Gastrocnemius medialis (tissue), 4 donors: ENCODE measurements at regions of chr9 and their contacts with region 1.

Region 1: GRCh38 chr9:70079417-70080037 is 35.9 kb downstream of the MAMDC2 start:
- DNase-seq: no peak
- ATAC-seq: peak; percentile 46 to 55
- H3K4me3 ChIP-seq: no peak overlapping the region
- H3K27ac ChIP-seq: peak overlapping the region; percentile 3 to 40 (median 38)
- H3K4me1 ChIP-seq: peaks cover 19 to 35% of the 10 kb centered on the region in 2 donors
- H3K27me3 ChIP-seq: no peaks in the 10 kb centered on the region
- CTCF ChIP-seq: no peak
- POLR2A ChIP-seq: no peak

Region 2: DNA sequence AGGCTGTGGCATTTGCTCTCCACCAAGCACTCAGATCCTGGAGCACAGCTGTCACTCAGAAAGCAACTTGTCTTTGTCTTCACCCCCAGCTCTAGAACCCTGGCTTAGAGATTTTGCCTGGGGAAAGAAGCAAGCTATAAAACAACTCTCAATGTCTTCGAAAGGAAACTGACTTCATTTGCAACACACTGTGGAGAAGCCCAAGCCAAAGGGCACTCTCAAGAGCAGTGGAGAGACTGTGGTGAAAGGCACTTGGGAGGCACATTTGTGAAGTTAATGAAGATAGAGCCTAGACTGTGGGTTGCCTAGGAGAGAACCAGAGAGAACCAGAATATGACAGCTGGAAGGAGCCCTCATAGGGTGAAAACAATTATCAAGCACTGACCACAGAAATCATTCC is 155.6 kb before region 1 on chr9:
- in situ Hi-C with region 1: no loop called
- intact Hi-C with region 1: no loop called
- DNase-seq: no peak
- ATAC-seq: no peak
- H3K4me3 ChIP-seq: no peak overlapping the region
- H3K27ac ChIP-seq: no peak overlapping the region
- H3K4me1 ChIP-seq: no peaks in the 10 kb centered on the region
- H3K27me3 ChIP-seq: no peaks in the 10 kb centered on the region
- CTCF ChIP-seq: no peak
- POLR2A ChIP-seq: no peak

Region 3: GRCh38 chr9:69996967-69997366 is 82.6 kb before region 1 on chr9:
- in situ Hi-C with region 1: no loop called
- intact Hi-C with region 1: no loop called
- DNase-seq: peak; percentile 41 to 44
- ATAC-seq: peak; percentile 72 to 91
- H3K4me3 ChIP-seq: no peak overlapping the region
- H3K27ac ChIP-seq: peak overlapping the region; percentile 56 to 72 (median 65)
- H3K4me1 ChIP-seq: peaks cover 3 to 4% of the 10 kb centered on the region in 2 donors
- H3K27me3 ChIP-seq: no peaks in the 10 kb centered on the region
- CTCF ChIP-seq: no peak
- POLR2A ChIP-seq: no peak

Region 4: DNA sequence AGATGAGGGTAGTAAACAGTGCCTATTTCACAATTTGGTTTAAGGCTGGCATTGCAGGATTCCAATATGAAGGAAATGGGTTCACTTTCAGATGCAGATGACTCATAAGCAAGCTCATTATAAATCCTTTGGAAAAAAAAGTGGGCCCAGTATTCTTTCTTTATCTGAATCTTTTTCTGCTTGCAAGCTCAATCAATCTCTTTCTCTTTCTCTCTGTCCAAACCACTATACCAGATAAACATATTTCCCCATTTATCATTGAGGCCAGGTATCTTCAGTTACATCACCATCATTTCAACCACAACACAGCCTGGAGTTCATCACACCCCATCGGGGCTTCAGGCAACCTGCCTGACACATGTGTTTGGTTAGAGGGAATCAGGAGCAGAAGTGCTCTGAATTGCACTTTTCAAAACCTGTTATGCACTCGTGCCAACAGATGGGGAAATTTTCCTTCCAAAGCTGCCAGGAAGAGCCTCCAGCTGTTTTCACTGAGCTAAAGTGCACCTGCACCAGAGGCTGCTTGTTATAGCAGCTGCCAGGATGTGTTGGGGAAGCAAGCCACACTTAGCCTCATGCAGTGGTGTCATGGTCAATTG is 65.8 kb before region 1 on chr9:
- in situ Hi-C with region 1: no loop called
- intact Hi-C with region 1: loop called (anchors 5 kb)
- DNase-seq: peak; percentile 15 to 72
- ATAC-seq: peak; percentile 61 to 82
- H3K4me3 ChIP-seq: no peak overlapping the region
- H3K27ac ChIP-seq: peak overlapping the region in 1 of 4 donors; percentile 50
- H3K4me1 ChIP-seq: peaks cover 0 to 3% of the 10 kb centered on the region in 2 donors
- H3K27me3 ChIP-seq: no peaks in the 10 kb centered on the region
- CTCF ChIP-seq: no peak
- POLR2A ChIP-seq: no peak

Region 5: GRCh38 chr9:70205367-70206032 is 126.0 kb after region 1 on chr9:
- in situ Hi-C with region 1: no loop called
- intact Hi-C with region 1: no loop called
- DNase-seq: no peak
- ATAC-seq: no peak
- H3K4me3 ChIP-seq: no peak overlapping the region
- H3K27ac ChIP-seq: no peak overlapping the region
- H3K4me1 ChIP-seq: no peaks in the 10 kb centered on the region
- H3K27me3 ChIP-seq: no peaks in the 10 kb centered on the region
- CTCF ChIP-seq: no peak
- POLR2A ChIP-seq: no peak

Region 6: DNA sequence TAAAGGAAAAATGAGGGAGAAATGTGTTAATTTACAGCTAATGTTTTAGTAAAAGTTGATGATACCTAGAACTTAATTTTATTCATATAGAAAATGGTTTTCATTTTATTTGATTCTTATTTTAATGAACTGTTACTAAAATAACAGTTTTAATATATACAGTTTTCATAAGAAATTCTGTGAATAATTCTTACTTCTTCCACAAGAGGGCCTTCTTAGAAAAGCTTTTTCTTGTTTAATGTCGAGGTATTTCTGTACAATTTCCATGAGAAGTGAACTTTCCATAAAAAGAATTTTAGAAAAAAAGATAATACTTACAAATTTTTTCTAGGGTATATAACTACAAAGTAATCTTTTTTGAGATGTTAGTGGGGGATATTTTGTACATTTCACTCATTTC is 261.0 kb after region 1 on chr9:
- in situ Hi-C with region 1: no loop called
- intact Hi-C with region 1: no loop called
- DNase-seq: no peak
- ATAC-seq: no peak
- H3K4me3 ChIP-seq: no peak overlapping the region
- H3K27ac ChIP-seq: no peak overlapping the region
- H3K4me1 ChIP-seq: no peaks in the 10 kb centered on the region
- H3K27me3 ChIP-seq: no peaks in the 10 kb centered on the region
- CTCF ChIP-seq: peak; percentile 39 to 64 (median 58)
- POLR2A ChIP-seq: no peak